Pancreas (tissue), 10 donors: ENCODE measurements at regions of chr19 and their contacts with region 1.

Region 1: GRCh38 chr19:42450314-42450934 is 7.7 kb upstream of the CXCL17 start:
- DNase-seq: peak; percentile 76 to 91 (median 86)
- ATAC-seq: peak; percentile 86 to 99 (median 97)
- H3K4me3 ChIP-seq: no peak overlapping the region
- H3K27ac ChIP-seq: peak overlapping the region in 2 of 4 donors; percentile 38 to 55
- H3K4me1 ChIP-seq: peaks cover 0 to 11% (median 4%) of the 10 kb centered on the region in 3 donors
- H3K27me3 ChIP-seq: no peaks in the 10 kb centered on the region
- CTCF ChIP-seq: peak; percentile 69 to 79 (median 72)

Region 2: GRCh38 chr19:42313096-42313839 is 137.2 kb before region 1 on chr19 and contains the start of gene TMEM145:
- intact Hi-C with region 1: no loop called
- DNase-seq: peak in 4 of 6 donors; percentile 58 to 84 (median 74)
- ATAC-seq: peak; percentile 90 to 95 (median 94)
- H3K4me3 ChIP-seq: peak within 1 kb of the TSS; percentile 31 to 64 (median 39)
- H3K27ac ChIP-seq: no peak within 1 kb of the TSS
- H3K4me1 ChIP-seq: no peaks in the 10 kb centered on the region
- H3K27me3 ChIP-seq: no peaks in the 10 kb centered on the region
- CTCF ChIP-seq: no peak
- total RNA-seq, gene TMEM145: 0.46 to 1.5 (median 0.94) TPM

Region 3: GRCh38 chr19:42333975-42334696 is 116.3 kb before region 1 on chr19:
- intact Hi-C with region 1: no loop called
- DNase-seq: no peak
- ATAC-seq: no peak
- H3K4me3 ChIP-seq: no peak overlapping the region
- H3K27ac ChIP-seq: no peak overlapping the region
- H3K4me1 ChIP-seq: no peaks in the 10 kb centered on the region
- H3K27me3 ChIP-seq: no peaks in the 10 kb centered on the region
- CTCF ChIP-seq: no peak

Region 4: DNA sequence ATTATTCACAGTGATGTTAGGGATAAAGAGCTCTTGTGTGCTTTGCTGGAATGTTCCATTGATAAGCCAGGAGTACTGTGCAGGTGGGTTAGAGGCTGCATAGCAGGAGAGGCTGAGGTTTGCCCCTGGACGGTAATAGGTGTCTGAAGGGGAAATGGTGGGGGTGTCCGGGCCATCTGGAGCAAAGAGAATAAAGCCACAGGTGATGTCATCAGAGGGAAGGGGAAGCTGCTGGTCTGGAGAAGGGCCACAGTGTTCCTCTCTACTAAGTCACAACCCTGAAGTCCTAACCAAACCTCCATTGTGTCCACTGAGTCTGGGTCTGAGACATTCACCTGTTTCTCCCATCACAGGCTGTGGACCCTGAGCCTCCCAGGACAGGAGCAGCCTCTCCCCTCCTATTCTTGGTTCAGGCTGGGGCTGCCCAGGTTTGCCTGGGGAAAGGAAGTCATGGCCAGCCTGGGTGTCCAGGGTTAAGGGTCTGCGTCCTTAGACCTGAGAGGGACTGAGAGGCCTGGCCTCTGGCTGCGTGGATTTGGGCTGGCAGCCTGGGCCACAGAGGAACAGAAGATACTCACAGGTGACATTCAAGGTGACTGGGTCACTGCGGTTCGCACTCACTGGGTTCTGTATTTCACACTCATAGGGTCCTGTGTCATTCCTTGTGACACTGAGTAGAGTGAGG is 71.1 kb after region 1 on chr19:
- intact Hi-C with region 1: loop called in 2 of 3 experiments (anchors 5 kb)
- DNase-seq: no peak
- ATAC-seq: no peak
- H3K4me3 ChIP-seq: no peak overlapping the region
- H3K27ac ChIP-seq: no peak overlapping the region
- H3K4me1 ChIP-seq: no peaks in the 10 kb centered on the region
- H3K27me3 ChIP-seq: no peaks in the 10 kb centered on the region
- CTCF ChIP-seq: no peak

Region 5: GRCh38 chr19:42529248-42529764 is 78.9 kb after region 1 on chr19:
- intact Hi-C with region 1: loop called in 2 of 3 experiments (anchors 5 kb)
- DNase-seq: peak; percentile 40 to 86 (median 74)
- ATAC-seq: peak; percentile 92 to 97 (median 96)
- H3K4me3 ChIP-seq: peak overlapping the region in 1 of 4 donors; percentile 13
- H3K27ac ChIP-seq: peak overlapping the region in 1 of 4 donors; percentile 62
- H3K4me1 ChIP-seq: peaks cover 0 to 3% (median 0%) of the 10 kb centered on the region in 3 donors
- H3K27me3 ChIP-seq: no peaks in the 10 kb centered on the region
- CTCF ChIP-seq: peak; percentile 83 to 94 (median 90)

Region 6: DNA sequence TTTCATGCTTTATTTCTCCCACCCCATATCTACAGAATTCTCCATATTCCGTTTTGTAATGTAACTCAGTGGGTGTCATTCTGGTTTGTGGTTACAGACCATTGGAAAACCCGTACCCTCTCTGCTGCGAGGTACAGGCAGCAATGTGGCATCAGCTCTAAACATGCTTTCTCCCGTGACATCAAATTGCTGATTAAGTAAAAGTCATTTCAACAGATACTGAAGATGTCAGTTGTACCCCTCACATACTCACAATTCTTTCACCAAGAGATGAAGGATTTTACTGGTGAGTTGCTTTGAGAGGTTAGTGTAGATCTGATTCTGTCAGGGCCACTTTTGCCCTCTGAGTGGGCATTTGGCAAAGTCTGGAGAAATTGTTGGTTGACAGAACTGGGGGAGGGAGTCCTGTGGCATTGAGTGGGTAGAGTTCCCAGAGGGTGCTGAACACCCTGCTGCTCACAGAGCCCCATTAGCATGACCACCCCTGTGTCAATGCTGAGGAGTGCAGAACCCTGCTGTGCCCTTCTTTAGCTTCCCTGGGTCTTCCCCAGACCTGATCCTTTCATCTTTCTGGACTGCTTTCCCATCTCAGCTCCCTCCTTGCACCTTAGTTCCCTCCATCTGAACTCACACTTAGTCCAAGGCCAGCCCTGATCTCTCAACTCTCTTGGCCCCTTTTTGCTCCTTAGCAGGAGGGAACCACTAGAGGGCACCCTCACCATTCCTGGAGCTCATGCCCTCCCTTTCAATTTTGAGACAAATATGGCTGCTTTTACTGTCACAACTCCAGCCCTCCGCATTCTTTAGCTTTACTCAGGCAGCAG is 184.2 kb after region 1 on chr19:
- intact Hi-C with region 1: no loop called
- DNase-seq: peak in 5 of 6 donors; percentile 9 to 65 (median 42)
- ATAC-seq: peak; percentile 69 to 95 (median 82)
- H3K4me3 ChIP-seq: no peak overlapping the region
- H3K27ac ChIP-seq: no peak overlapping the region
- H3K4me1 ChIP-seq: no peaks in the 10 kb centered on the region
- H3K27me3 ChIP-seq: no peaks in the 10 kb centered on the region
- CTCF ChIP-seq: peak; percentile 42 to 65 (median 59)